Activated CD4-positive, alpha-beta T cell treated with anti-CD3 and anti-CD28 coated beads for 36 hours (primary cell): ENCODE measurements at regions of chr12 and their contacts with region 1.

Region 1: DNA sequence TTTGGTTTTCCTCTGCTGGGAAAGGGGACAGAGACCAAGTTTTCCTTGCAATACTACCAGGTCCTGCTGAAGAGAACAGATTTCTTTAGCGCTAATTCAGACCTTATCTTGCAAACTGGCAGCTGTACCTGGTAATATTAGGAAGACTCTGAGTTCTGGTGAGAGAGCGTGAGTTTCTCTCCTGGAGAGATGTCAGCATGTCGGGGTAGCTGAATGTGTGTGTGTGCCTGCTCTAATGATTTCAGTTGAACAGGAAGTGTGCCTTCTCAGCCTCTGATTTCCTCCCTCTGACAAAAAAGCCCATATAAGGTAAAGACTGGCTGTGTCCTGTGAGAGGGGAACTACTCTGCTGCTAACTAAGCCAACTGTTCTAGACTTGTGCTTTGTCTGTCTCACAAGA is 10.3 kb upstream of the ERP27 start:
- DNase-seq: peak; percentile 68
- ATAC-seq: peak; percentile 82
- H3K4me3 Mint-ChIP-seq: peak overlapping the region; percentile 73
- H3K27ac Mint-ChIP-seq: peak overlapping the region; percentile 96
- H3K4me1 Mint-ChIP-seq: peaks cover 87% of the 10 kb centered on the region
- H3K27me3 Mint-ChIP-seq: no peaks in the 10 kb centered on the region

Region 2: DNA sequence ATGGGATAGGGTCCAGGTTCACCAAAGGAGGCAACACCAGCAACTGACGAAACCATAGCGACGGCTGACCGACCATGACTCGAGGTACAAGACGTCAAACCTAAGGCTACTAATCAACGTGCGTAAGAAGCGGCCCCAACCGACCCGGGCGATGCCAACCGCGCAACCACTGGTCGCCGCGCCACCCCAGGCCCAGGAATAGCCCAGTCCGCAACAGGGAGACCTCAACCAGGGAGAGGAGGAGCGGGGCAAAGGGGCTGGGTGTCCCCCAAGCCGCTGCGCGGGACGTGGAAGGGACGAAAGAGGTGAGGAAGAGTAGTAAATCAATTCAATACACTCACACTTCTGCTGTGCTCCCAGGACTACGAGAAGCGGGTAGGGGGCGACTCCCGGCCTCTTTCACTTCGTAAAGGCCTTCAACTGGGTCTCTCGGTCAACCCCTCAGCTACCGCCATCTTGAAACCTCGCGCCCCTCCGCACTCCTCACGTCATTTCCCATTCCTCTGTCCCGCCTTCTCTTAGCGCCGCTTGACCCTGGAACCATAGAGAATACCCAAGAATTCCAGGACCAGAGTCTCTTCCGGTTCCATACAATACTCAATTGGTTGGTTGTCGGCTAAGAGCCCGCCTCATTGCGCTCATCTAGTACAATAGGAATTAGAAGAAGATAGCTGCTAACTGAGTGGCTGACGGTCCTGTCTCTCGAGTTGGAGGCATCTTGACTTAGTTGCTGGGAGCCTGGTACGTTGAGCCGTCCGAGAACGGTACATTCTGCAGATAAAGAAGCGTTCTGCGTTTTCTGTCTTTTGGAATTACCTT is 145.5 kb before region 1 on chr12 and contains the starts of genes C12orf60 and WBP11:
- CTCF ChIA-PET with region 1: no interaction called
- POLR2A ChIA-PET with region 1: no interaction called
- intact Hi-C with region 1: loop called (anchors 2 kb)
- DNase-seq: peak; percentile 92
- ATAC-seq: peak; percentile 99
- H3K4me3 Mint-ChIP-seq: no peak within 1 kb of the TSS
- H3K27ac Mint-ChIP-seq: no peak within 1 kb of the TSS
- H3K4me1 Mint-ChIP-seq: peaks cover 33% of the 10 kb centered on the region
- H3K27me3 Mint-ChIP-seq: no peaks in the 10 kb centered on the region
- total RNA-seq, gene C12orf60: 2.9 to 3.0 TPM
- total RNA-seq, gene WBP11: 143 to 193 TPM

Region 3: DNA sequence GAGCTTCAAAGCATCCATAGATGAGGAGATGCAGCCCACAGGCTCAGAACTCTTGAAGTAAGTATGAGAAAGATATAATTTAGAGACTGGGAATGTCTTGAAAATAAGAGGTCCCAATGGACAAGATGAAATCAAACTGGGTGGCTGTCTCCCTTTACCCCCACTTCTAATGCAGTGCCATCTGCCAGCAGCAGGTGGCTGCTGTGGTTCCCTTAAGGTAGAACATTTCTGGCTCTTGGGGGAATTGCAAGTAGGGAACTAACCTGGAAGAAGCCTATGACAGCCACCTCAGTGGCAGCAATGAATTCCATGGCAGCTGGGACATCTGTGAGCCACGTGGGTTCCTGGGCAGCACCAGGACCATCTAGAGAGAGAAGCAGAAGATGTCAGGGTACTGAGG is 11.0 kb before region 1 on chr12:
- CTCF ChIA-PET with region 1: interaction called, 8 read pairs
- POLR2A ChIA-PET with region 1: no interaction called
- intact Hi-C with region 1: loop called in 1 of 2 experiments (anchors 1 kb)
- DNase-seq: peak; percentile 42
- ATAC-seq: peak; percentile 31
- H3K4me3 Mint-ChIP-seq: no peak overlapping the region
- H3K27ac Mint-ChIP-seq: peak overlapping the region; percentile 44
- H3K4me1 Mint-ChIP-seq: peaks cover 30% of the 10 kb centered on the region
- H3K27me3 Mint-ChIP-seq: no peaks in the 10 kb centered on the region

Region 4: DNA sequence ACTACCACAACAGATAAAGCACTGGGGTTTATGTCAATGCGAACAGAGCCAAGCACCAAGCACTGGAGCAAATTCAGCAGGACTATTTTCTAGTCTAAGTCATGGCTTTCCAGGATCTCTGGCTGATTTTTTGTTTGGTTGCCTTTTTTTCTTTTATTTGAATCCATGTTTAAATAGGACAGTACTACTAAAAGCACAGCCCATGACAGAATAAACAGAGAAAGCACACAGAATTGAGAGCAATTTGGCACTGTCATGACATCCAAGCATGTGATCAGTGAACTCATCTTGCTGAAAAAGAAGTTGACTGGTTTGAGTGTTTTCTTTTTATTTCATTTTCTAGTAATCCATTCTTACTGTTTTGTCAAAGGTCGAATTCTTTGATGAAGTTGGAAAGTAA is 295.7 kb after region 1 on chr12:
- CTCF ChIA-PET with region 1: no interaction called
- POLR2A ChIA-PET with region 1: no interaction called
- intact Hi-C with region 1: no loop called
- DNase-seq: no peak
- ATAC-seq: no peak
- H3K4me3 Mint-ChIP-seq: no peak overlapping the region
- H3K27ac Mint-ChIP-seq: no peak overlapping the region
- H3K4me1 Mint-ChIP-seq: no peaks in the 10 kb centered on the region
- H3K27me3 Mint-ChIP-seq: peaks cover 47% of the 10 kb centered on the region